ENCODE measurements at regions of chr5 and their contacts with region 1.

Region 1: DNA sequence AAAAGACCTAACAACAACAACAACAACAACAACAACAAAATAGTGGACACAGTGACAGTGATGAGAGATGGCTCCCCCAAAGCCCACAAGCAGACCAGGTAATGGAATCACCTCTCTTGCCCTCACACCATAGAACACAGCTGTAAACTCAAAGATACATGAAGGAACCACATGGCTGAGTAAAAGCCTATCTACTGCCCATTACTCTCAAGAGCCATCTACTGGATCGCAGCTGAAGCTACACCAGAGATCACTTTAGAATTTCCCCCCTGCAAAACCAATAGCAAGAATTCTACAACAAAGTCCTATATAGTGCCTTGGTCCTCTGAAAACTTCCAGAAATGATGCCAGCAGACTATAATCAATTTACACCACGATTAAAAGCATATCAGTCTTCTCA is 1537.6 kb upstream of the CDH9 start:
- DNase-seq: peak in 1 of 2 experiments; percentile 11
- H3K4me3 ChIP-seq: no peak overlapping the region
- H3K4me3 Mint-ChIP-seq: no peak overlapping the region
- H3K27ac Mint-ChIP-seq: no peak overlapping the region
- H3K4me1 ChIP-seq: no peaks in the 10 kb centered on the region
- H3K4me1 Mint-ChIP-seq: peaks cover 5% of the 10 kb centered on the region
- H3K27me3 ChIP-seq: no peaks in the 10 kb centered on the region
- H3K27me3 Mint-ChIP-seq: no peaks in the 10 kb centered on the region
- CTCF ChIP-seq: peak; percentile 33 to 61

Region 2: DNA sequence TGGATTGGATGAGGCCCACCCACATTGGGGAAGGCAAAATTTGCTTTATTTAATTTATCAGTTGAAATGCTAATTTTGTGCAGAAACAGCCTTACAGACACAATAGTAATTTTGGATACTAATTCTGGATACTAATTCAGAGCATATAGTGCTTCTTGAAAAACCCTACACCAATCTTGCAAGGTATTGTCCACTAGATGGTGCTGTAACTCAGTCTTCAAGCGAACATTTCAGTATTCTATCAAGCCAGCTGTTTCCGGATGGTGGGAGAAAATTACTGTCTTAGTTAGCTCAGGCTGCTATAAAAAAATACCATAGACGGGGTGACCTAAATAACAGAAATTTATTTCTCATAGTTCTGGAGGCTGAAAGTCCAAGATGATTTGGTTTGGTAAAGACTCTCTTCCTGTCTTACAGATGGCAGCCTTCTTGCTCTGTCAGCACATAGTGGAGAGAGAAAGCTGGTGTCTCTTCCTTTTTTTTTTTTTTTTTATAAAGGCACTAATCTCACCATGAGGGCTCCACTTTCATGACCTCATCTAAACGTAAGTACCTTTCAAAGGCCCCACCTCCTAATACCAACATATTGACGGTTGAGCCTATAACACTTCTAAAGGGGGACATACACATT is 231.1 kb before region 1 on chr5:
- CTCF ChIA-PET with region 1: interaction called, 10 read pairs
- POLR2A ChIA-PET with region 1: no interaction called
- intact Hi-C with region 1: loop called (anchors 1 kb)
- DNase-seq: peak in 1 of 2 experiments; percentile 38
- H3K4me3 ChIP-seq: no peak overlapping the region
- H3K4me3 Mint-ChIP-seq: no peak overlapping the region
- H3K27ac Mint-ChIP-seq: no peak overlapping the region
- H3K4me1 ChIP-seq: no peaks in the 10 kb centered on the region
- H3K4me1 Mint-ChIP-seq: no peaks in the 10 kb centered on the region
- H3K27me3 ChIP-seq: no peaks in the 10 kb centered on the region
- H3K27me3 Mint-ChIP-seq: no peaks in the 10 kb centered on the region
- CTCF ChIP-seq: peak; percentile 59 to 75

Region 3: GRCh38 chr5:28473531-28474107 is 102.4 kb before region 1 on chr5:
- CTCF ChIA-PET with region 1: interaction called, 3 read pairs
- POLR2A ChIA-PET with region 1: no interaction called
- intact Hi-C with region 1: loop called (anchors 5 kb)
- DNase-seq: no peak
- H3K4me3 ChIP-seq: no peak overlapping the region
- H3K4me3 Mint-ChIP-seq: no peak overlapping the region
- H3K27ac Mint-ChIP-seq: no peak overlapping the region
- H3K4me1 ChIP-seq: no peaks in the 10 kb centered on the region
- H3K4me1 Mint-ChIP-seq: no peaks in the 10 kb centered on the region
- H3K27me3 ChIP-seq: no peaks in the 10 kb centered on the region
- H3K27me3 Mint-ChIP-seq: no peaks in the 10 kb centered on the region
- CTCF ChIP-seq: no peak

Region 4: GRCh38 chr5:28548856-28549255 is 27.2 kb before region 1 on chr5:
- CTCF ChIA-PET with region 1: no interaction called
- POLR2A ChIA-PET with region 1: no interaction called
- intact Hi-C with region 1: no loop called
- DNase-seq: no peak
- H3K4me3 ChIP-seq: no peak overlapping the region
- H3K4me3 Mint-ChIP-seq: no peak overlapping the region
- H3K27ac Mint-ChIP-seq: no peak overlapping the region
- H3K4me1 ChIP-seq: no peaks in the 10 kb centered on the region
- H3K4me1 Mint-ChIP-seq: no peaks in the 10 kb centered on the region
- H3K27me3 ChIP-seq: no peaks in the 10 kb centered on the region
- H3K27me3 Mint-ChIP-seq: no peaks in the 10 kb centered on the region
- CTCF ChIP-seq: no peak

Region 5: GRCh38 chr5:28691526-28691925 is 115.5 kb after region 1 on chr5:
- CTCF ChIA-PET with region 1: no interaction called
- POLR2A ChIA-PET with region 1: no interaction called
- intact Hi-C with region 1: no loop called
- DNase-seq: no peak
- H3K4me3 ChIP-seq: no peak overlapping the region
- H3K4me3 Mint-ChIP-seq: no peak overlapping the region
- H3K27ac Mint-ChIP-seq: no peak overlapping the region
- H3K4me1 ChIP-seq: no peaks in the 10 kb centered on the region
- H3K4me1 Mint-ChIP-seq: no peaks in the 10 kb centered on the region
- H3K27me3 ChIP-seq: no peaks in the 10 kb centered on the region
- H3K27me3 Mint-ChIP-seq: no peaks in the 10 kb centered on the region
- CTCF ChIP-seq: no peak

Region 6: DNA sequence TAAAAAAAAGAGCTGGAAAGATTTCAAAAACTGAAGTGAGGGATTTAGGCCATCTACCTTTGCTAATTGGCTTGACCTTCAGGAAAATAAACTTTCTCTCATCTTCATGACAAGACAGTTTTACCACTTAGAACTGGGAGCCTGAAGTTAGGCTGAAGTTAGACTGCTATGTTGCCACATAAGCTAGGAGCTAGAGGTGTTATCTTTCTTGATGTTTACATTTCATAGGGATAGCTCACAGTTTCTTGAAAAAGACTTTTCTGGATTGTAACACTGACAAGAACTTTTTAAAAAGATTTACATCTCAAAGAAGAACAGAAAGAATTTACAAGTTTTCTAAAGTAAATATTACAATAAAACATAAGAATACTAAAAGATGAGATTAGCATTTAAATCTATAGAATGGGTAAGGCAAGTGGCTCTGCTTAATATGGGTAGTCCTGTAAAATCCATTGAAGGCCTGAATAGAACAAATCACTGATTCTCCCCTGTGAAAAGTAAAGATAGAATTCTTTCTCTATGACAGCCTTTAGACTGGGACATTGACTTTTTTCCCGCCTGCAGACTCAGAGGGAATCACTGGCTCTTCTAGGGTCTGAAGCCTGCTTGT is 127.7 kb after region 1 on chr5:
- CTCF ChIA-PET with region 1: no interaction called
- POLR2A ChIA-PET with region 1: no interaction called
- intact Hi-C with region 1: no loop called
- DNase-seq: no peak
- H3K4me3 ChIP-seq: no peak overlapping the region
- H3K4me3 Mint-ChIP-seq: no peak overlapping the region
- H3K27ac Mint-ChIP-seq: no peak overlapping the region
- H3K4me1 ChIP-seq: no peaks in the 10 kb centered on the region
- H3K4me1 Mint-ChIP-seq: no peaks in the 10 kb centered on the region
- H3K27me3 ChIP-seq: no peaks in the 10 kb centered on the region
- H3K27me3 Mint-ChIP-seq: no peaks in the 10 kb centered on the region
- CTCF ChIP-seq: no peak